ENCODE measurements at regions of chr3 and their contacts with region 1.

Region 1: DNA sequence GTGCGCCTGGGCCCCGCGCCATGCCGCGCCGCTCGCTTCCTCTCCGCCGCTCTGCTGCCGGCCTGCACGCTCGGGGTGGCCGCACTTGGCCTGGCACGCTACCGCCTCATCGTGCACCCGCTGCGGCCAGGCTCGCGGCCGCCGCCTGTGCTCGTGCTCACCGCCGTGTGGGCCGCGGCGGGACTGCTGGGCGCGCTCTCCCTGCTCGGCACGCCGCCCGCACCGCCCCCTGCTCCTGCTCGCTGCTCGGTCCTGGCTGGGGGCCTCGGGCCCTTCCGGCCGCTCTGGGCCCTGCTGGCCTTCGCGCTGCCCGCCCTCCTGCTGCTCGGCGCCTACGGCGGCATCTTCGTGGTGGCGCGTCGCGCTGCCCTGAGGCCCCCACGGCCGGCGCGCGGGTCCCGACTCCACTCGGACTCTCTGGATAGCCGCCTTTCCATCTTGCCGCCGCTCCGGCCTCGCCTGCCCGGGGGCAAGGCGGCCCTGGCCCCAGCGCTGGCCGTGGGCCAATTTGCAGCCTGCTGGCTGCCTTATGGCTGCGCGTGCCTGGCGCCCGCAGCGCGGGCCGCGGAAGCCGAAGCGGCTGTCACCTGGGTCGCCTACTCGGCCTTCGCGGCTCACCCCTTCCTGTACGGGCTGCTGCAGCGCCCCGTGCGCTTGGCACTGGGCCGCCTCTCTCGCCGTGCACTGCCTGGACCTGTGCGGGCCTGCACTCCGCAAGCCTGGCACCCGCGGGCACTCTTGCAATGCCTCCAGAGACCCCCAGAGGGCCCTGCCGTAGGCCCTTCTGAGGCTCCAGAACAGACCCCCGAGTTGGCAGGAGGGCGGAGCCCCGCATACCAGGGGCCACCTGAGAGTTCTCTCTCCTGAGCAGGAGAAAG is 951 bp downstream of the GPR62 start:
- DNase-seq: peak in 1 of 2 experiments; percentile 89
- H3K4me3 ChIP-seq: peak overlapping the region; percentile 13 to 66 (median 48); a peak in 7 of 8 replicates
- H3K27ac ChIP-seq: no peak overlapping the region
- H3K4me1 ChIP-seq: peaks cover 0 to 15% (median 7%) of the 10 kb centered on the region in 4 experiments; a peak in 6 of 7 replicates
- H3K27me3 ChIP-seq: peaks cover 15 to 43% (median 35%) of the 10 kb centered on the region in 4 experiments
- CTCF ChIP-seq: peak in 2 of 3 experiments; percentile 63 to 81; a peak in 3 of 4 replicates
- EP300 ChIP-seq: 0 out of 3 replicates have a peak, but pooled peaks of 1 of the 2 experiments have one; percentile 18
- POLR2A ChIP-seq: peak in 1 of 2 experiments; percentile 6; a peak in 1 of 3 replicates
- RAD21 ChIP-seq: peak; percentile 47 to 74

Region 2: DNA sequence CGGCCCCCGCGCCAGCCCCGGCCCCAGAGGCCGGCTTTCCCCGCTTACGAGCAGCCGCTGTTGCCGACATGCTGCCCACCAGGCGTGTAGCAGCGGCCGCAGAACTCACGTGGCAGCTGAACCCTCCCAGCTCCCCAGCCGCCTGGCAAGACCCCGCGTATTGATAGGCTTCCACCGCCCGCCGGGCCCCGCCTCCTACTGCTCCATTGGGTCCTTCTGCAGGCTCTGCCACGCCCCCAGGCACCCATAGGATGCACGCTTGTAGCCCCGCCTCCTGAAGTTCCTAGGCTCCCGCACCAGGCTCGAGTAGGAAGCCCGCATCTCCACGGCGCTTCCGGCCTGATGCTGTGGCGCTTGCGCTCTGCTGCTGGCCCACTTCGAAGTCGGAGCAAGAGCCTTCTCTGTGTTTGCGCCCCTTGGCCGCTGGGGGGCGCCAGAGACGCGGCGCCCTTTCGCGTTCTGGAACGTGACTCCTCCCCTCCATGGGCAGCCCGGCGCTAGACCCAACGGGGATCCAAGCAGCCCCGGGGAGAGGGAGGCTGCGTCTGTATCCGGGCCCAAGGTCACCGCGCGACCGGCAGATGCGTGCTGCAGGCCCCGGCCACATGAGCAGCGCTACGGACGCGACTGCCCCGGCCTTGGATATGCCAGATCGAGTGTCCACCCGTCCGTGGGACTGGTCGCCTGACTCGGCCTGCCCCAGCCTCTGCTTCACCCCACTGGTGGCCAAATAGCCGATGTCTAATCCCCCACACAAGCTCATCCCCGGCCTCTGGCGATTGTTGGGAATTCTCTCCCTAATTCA is 14.1 kb before region 1 on chr3 and contains the starts of genes PARP3 and RRP9:
- CTCF ChIA-PET with region 1: interaction called, 44 read pairs
- POLR2A ChIA-PET with region 1: interaction called, 130 read pairs
- DNase-seq: peak; percentile 99 to 100
- H3K4me3 ChIP-seq: peak within 1 kb of the TSS; percentile 50 to 88 (median 82)
- H3K27ac ChIP-seq: no peak within 1 kb of the TSS
- H3K4me1 ChIP-seq: peaks cover 2 to 13% (median 6%) of the 10 kb centered on the region in 4 experiments
- H3K27me3 ChIP-seq: peaks cover 0 to 10% (median 4%) of the 10 kb centered on the region in 4 experiments; a peak in 4 of 7 replicates
- CTCF ChIP-seq: peak in 2 of 3 experiments; percentile 97; a peak in 3 of 4 replicates
- EP300 ChIP-seq: no peak
- POLR2A ChIP-seq: peak in 1 of 2 experiments; percentile 71; a peak in 1 of 3 replicates
- RAD21 ChIP-seq: peak; percentile 84 to 90
- total RNA-seq, gene PARP3: 1.1 and 1.3 TPM in 2 replicates
- total RNA-seq, gene RRP9: 55.6 TPM in 2 replicates

Region 3: DNA sequence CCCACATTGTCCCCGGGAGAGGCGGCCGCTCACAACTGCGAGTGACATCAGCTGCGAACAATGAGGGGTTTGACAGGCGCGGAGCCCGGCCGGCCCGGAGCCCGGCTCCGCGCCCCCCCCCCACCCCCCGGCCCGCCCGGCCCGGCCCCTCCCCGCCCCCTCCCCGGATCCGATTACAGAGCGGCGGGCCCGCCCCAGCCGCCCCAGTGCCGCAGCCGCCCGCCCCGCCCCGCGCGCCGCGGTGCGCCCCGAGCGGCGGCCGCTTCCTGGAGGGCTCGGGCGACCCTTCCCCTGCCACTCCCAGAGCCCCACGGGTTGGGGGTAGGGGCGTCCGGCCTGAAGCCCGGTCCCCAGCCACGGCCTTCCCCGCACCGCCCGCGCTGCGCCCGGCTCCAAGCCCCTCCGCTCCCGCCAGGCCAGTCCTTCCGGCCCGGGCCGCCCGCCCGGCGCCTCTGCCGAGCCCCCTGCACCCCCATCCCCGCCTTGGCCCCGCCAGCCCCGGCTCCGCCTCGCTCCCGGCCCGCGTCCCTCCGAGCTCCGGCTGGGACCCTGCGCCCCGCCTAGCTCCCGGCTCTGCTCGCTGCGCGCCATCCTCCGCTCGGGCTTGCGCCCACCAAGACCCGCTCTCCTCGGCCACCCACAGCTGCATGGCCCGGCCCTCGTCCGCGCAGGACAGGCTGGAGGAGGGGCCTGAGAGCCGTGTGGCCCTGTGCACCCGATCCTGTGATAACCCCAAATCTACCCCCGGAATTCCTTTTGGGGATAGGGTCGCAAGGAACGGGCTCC is 11.4 kb after region 1 on chr3 and contains the start of gene PCBP4:
- CTCF ChIA-PET with region 1: interaction called, 64 read pairs
- POLR2A ChIA-PET with region 1: interaction called, 923 read pairs
- DNase-seq: peak in 1 of 2 experiments; percentile 77
- H3K4me3 ChIP-seq: peak within 1 kb of the TSS; percentile 57 to 90 (median 73)
- H3K27ac ChIP-seq: peak within 1 kb of the TSS; percentile 54
- H3K4me1 ChIP-seq: peaks cover 12 to 42% (median 33%) of the 10 kb centered on the region in 4 experiments
- H3K27me3 ChIP-seq: peaks cover 0 to 13% (median 2%) of the 10 kb centered on the region in 4 experiments; a peak in 5 of 7 replicates
- CTCF ChIP-seq: no peak
- EP300 ChIP-seq: no peak
- POLR2A ChIP-seq: no peak
- RAD21 ChIP-seq: no peak
- total RNA-seq, gene PCBP4: 16.4 and 19.6 TPM in 2 replicates

Region 4: DNA sequence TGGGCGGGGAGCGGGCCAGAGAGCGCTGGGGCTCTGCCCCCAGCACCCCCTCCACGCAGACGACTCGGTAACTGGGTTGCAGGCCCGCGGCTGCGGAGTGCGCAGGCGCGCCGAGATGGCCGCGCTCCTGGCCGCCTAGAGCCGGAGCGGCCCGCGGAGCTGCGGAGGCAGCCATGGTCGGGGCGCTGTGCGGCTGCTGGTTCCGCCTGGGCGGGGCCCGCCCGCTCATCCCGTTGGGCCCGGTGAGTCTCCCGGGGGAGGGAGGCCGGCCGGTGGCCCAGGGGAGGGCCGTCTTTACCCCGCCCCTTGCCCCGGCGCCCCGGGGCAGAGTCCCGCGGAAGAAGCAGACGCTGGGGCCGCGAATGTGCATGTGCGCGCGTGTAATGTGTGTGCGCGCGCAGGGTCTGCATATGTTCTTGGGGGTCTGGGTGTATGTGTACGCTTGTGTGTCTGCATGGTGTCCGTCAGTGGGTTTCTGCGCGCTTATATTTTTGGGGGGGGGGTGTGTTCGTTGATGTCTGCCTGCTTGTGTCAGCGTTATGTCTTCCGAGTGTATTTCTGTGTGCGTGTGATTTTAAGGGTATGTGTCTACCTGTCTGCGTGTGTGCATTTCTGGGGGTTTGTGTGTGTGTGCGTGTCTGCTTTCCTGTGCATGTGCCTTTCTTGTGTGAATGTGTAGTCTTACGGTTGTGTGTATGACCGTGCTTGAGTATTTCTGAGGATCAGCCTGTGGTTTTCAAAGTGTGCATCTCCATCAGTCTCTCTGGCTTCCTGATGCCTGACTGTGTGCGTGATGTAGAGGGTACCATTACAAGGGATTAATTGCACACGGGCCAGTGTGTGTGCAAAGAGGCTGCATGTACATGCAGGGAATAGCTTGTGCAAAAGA is 19.1 kb after region 1 on chr3 and contains the start of gene ABHD14A:
- CTCF ChIA-PET with region 1: interaction called, 66 read pairs
- POLR2A ChIA-PET with region 1: interaction called, 923 read pairs
- DNase-seq: peak in 1 of 2 experiments; percentile 82
- H3K4me3 ChIP-seq: peak within 1 kb of the TSS; percentile 34 to 64 (median 48)
- H3K27ac ChIP-seq: no peak within 1 kb of the TSS
- H3K4me1 ChIP-seq: peaks cover 6 to 21% (median 15%) of the 10 kb centered on the region in 4 experiments
- H3K27me3 ChIP-seq: peaks cover 2 to 32% (median 24%) of the 10 kb centered on the region in 4 experiments; a peak in 6 of 7 replicates
- CTCF ChIP-seq: no peak
- EP300 ChIP-seq: no peak
- POLR2A ChIP-seq: peak in 1 of 2 experiments; percentile 49; a peak in 1 of 3 replicates
- RAD21 ChIP-seq: no peak
- total RNA-seq, gene ABHD14A: 1.8 and 4.6 TPM in 2 replicates

Region 5: DNA sequence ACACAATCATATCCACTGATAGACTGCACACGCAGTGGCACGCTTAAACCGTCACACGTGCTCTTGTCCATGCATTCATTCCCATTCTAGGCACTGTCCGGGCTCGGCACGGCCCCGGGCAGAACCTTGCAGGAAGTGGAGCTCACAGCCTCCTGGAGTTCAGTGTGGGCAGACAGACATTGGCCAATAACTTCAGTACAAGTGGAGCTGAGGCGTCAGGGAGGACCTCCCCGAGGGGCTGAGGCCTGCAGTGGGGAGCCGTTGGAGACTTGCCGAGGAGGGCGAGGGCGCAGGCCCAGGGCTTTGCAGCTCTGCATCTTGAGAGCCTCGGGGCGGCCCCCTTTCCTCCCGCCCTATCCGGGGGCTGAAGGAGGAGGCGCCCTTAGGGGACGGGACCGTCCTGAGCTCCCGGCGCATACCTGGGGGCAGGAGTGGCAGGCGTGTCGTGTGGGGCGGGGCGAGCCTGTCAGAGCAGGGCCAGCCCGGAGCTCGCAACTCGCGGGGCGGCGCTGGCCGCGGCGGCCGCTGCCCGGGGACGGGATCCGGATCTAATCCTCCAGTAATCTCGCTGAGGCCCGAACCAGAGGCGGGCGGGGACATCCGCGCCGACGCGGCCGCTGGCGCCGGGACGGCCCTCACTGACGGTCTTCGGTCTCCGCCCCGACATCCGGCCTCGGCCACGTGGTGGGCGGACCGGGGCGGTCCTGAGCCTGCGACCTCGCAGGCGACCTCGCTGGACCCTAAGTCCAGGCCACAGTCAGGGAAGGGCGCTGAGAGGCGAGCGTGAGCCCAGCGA is 26.8 kb after region 1 on chr3 and contains the start of gene ACY1:
- CTCF ChIA-PET with region 1: interaction called, 66 read pairs
- POLR2A ChIA-PET with region 1: interaction called, 923 read pairs
- DNase-seq: peak in 1 of 2 experiments; percentile 89
- H3K4me3 ChIP-seq: peak within 1 kb of the TSS; percentile 53 to 63 (median 56)
- H3K27ac ChIP-seq: peak within 1 kb of the TSS; percentile 45; the same call in 1 of the 2 replicates
- H3K4me1 ChIP-seq: peaks cover 0 to 12% (median 9%) of the 10 kb centered on the region in 4 experiments; a peak in 6 of 7 replicates
- H3K27me3 ChIP-seq: no peaks in the 10 kb centered on the region
- CTCF ChIP-seq: no peak
- EP300 ChIP-seq: no peak
- POLR2A ChIP-seq: peak in 1 of 2 experiments; percentile 86; a peak in 2 of 3 replicates
- RAD21 ChIP-seq: no peak
- total RNA-seq, gene ACY1: 45.5 and 48.3 TPM in 2 replicates

Measured in H1 (cell line).